Activated CD4-positive, alpha-beta memory T cell treated with anti-CD3 and anti-CD28 coated beads for 36 hours (primary cell): ENCODE measurements at regions of chr3 and their contacts with region 1.

Region 1: GRCh38 chr3:187788984-187789857 is 44.0 kb upstream of the BCL6 start:
- DNase-seq: peak; percentile 45
- H3K4me3 Mint-ChIP-seq: no peak overlapping the region
- H3K27ac Mint-ChIP-seq: peak overlapping the region; percentile 77
- H3K4me1 Mint-ChIP-seq: peaks cover 23% of the 10 kb centered on the region
- H3K27me3 Mint-ChIP-seq: no peaks in the 10 kb centered on the region

Region 2: DNA sequence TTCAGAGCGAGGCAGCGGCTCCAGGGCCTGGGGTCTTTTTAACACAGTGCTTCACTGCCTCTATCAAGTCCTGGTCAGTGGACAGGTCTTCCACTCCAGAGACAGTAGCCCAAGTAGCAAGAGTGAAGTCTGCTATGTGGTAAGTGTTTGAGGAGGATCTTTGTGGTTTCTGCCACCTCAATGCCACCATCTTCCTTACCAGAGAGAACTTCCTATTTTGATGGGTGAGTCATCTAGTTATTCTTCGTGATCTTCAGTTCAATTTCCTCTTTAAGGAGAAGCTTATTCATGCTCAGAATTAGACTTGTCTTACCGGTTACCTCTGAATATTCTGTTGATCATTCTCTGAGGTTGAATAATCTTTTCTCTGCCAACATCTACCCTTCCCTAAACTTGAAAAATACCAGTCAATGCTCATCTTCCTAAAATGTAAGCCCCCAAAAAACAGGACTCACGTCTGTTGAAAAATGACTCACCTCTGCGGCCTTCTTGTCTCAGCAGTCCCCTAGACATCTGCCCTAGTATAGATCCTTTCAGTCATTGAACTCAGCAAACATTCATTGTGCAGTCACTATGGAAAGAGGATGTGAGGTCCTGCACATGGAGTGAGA is 11.8 kb before region 1 on chr3:
- CTCF ChIA-PET with region 1: no interaction called
- POLR2A ChIA-PET with region 1: interaction called, 3 read pairs
- intact Hi-C with region 1: loop called (anchors 1 kb)
- DNase-seq: peak; percentile 72
- H3K4me3 Mint-ChIP-seq: peak overlapping the region; percentile 21
- H3K27ac Mint-ChIP-seq: peak overlapping the region; percentile 91
- H3K4me1 Mint-ChIP-seq: peaks cover 50% of the 10 kb centered on the region
- H3K27me3 Mint-ChIP-seq: no peaks in the 10 kb centered on the region

Region 3: DNA sequence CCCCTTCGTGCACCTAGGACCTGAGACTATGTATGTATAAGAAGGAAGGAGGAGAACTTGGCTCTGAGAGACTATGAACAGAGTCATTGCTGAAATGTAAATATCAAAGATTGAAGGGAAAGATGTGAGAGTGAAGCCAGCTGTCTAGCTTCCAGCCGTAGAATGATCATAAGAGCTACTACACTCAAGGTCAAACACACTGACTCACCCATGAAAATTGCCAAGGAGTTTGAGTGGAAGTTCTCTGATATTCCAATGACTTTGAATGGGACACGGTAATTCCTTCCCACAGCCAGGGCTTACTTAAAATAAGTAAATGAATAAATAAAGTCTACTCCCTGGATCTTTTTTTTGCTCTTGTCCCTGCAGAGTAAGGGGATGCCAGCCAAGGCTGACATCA is 983.7 kb after region 1 on chr3:
- CTCF ChIA-PET with region 1: no interaction called
- POLR2A ChIA-PET with region 1: no interaction called
- intact Hi-C with region 1: no loop called
- DNase-seq: no peak
- H3K4me3 Mint-ChIP-seq: no peak overlapping the region
- H3K27ac Mint-ChIP-seq: no peak overlapping the region
- H3K4me1 Mint-ChIP-seq: no peaks in the 10 kb centered on the region
- H3K27me3 Mint-ChIP-seq: no peaks in the 10 kb centered on the region